Activated CD4-positive, alpha-beta memory T cell treated with anti-CD3 and anti-CD28 coated beads for 36 hours (primary cell): ENCODE measurements at regions of chr7 and their contacts with region 1.

Region 1: DNA sequence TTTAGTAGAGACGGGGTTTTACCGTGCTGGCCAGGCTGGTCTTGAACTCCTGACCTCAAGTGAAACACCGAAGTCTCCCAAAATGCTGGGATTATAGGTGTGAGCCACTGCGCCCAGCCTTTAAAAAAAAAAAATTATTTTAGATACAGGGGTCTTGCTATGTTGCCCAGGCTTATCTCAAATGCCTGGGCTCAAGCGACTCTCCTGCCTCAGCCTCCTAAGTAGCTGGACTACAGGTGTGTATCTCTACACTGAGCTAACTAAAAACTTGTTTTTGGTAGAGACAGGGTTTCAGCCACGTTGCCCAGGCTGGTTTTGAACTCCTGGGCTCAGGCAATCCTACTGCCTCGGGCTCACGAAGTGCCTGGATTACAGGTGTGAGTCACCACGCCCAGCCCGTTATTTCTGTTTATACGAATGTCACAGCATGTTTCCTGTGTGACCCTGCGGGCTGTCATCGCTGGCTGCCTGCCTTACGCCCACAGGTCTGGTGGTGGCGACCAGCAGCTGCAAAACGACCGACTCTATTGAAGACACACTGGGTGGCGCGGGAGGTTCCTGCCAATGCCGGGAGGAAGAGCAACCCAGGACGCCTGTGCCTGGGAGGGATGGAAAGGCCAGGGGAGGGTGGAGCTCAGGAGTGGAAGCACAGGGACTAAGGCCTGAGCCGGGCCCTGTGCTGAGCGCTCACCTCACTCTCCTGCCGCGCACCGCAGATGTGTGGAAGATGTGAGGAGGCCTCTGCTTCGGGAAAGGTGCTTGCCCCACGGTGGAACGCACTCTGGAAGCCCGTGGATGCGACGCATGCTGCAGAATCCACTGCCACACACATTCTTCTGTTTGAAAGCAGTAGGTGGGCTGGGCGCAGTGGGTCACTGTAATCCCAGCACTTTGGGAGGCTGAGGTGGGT is 32.8 kb downstream of the AMZ1 start:
- DNase-seq: peak; percentile 95
- H3K4me3 Mint-ChIP-seq: peak overlapping the region; percentile 16
- H3K27ac Mint-ChIP-seq: peak overlapping the region; percentile 56
- H3K4me1 Mint-ChIP-seq: peaks cover 47% of the 10 kb centered on the region
- H3K27me3 Mint-ChIP-seq: no peaks in the 10 kb centered on the region

Region 2: GRCh38 chr7:2851497-2851896 is 130.7 kb after region 1 on chr7:
- CTCF ChIA-PET with region 1: no interaction called
- POLR2A ChIA-PET with region 1: no interaction called
- intact Hi-C with region 1: loop called (anchors 2 kb)
- DNase-seq: peak; percentile 50
- H3K4me3 Mint-ChIP-seq: no peak overlapping the region
- H3K27ac Mint-ChIP-seq: peak overlapping the region; percentile 66
- H3K4me1 Mint-ChIP-seq: peaks cover 9% of the 10 kb centered on the region
- H3K27me3 Mint-ChIP-seq: no peaks in the 10 kb centered on the region

Region 3: DNA sequence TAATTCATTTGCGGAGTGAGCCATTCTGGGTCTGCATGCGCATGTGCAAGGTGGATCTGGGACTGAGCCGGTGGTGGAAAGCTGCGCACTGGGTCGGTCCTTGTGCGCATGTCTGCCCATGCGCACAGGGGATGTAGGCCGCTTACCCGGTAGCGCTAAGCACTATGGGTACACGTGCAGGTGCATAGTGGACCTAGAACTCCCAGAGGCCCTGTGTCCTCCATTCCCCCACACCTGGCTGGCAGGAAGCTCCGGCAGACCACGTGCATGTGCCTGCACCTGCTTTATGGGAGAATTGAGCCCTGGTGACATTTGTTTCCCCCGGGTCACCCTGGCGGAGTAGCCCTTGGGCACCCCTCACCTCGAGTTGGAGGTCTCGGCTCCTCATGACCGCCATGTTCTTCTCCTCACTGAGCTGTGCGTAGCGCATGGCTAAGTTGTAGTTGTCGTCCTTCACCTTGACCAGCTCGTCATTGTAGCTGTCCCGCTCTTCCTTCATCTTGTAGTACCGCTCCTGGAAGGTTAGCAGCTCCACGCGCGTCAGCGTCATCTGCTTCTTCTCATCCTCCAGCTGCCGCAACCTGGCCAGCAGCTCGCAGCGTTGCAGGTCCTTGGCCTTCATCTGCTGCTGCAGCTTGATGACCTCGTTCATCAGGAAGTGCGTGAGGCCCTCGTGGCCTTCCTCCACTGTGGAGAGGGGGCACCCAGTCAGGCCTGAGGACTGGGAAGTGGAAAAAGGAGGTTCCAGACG is 223.2 kb after region 1 on chr7:
- CTCF ChIA-PET with region 1: no interaction called
- POLR2A ChIA-PET with region 1: no interaction called
- intact Hi-C with region 1: no loop called
- DNase-seq: peak; percentile 7
- H3K4me3 Mint-ChIP-seq: no peak overlapping the region
- H3K27ac Mint-ChIP-seq: no peak overlapping the region
- H3K4me1 Mint-ChIP-seq: peaks cover 20% of the 10 kb centered on the region
- H3K27me3 Mint-ChIP-seq: no peaks in the 10 kb centered on the region